GM10248 (cell line): ENCODE measurements at regions of chr7 and their contacts with region 1.

Region 1: GRCh38 chr7:121994625-121995410 is 121.9 kb downstream of the PTPRZ1 start:
- DNase-seq: peak; percentile 57
- CTCF ChIP-seq: peak; percentile 79

Region 2: GRCh38 chr7:121605317-121605680 is 389.5 kb before region 1 on chr7:
- CTCF ChIA-PET with region 1: interaction called, 11 read pairs
- POLR2A ChIA-PET with region 1: no interaction called
- DNase-seq: no peak
- CTCF ChIP-seq: no peak

Region 3: GRCh38 chr7:121752706-121753105 is 242.1 kb before region 1 on chr7:
- CTCF ChIA-PET with region 1: interaction called, 36 read pairs
- POLR2A ChIA-PET with region 1: no interaction called
- DNase-seq: no peak
- CTCF ChIP-seq: no peak

Region 4: GRCh38 chr7:122006687-122007086 is 11.9 kb after region 1 on chr7:
- CTCF ChIA-PET with region 1: interaction called, 19 read pairs
- POLR2A ChIA-PET with region 1: no interaction called
- DNase-seq: no peak
- CTCF ChIP-seq: no peak

Region 5: GRCh38 chr7:122132341-122132740 is 137.5 kb after region 1 on chr7:
- CTCF ChIA-PET with region 1: no interaction called
- POLR2A ChIA-PET with region 1: no interaction called
- DNase-seq: no peak
- CTCF ChIP-seq: no peak